ENCODE measurements at regions of chr6 and their contacts with region 1.

Region 1: DNA sequence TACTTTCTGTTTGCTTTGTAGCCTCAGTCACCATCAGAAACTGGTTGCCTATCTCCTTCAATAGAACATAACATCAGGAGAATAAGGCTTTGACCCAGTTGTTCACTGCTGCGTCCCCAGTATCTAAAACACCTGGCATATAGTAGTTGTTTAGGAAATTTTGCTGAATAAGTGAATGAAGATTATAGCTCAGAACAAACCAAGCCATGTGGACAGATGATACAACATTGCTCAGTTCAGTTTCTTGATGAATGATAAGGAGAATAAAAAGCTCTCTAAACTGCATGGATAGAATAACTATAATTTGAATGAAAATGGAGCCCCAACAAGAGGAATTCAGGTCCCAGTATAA is 5.2 kb upstream of the SERPINB1 start:
- DNase-seq: no peak

Region 2: GRCh38 chr6:2497922-2498623 is 348.8 kb before region 1 on chr6:
- intact Hi-C with region 1: no loop called
- DNase-seq: peak in 2 of 10 donors; percentile 17 to 86

Region 3: GRCh38 chr6:2911171-2911570 is 64.3 kb after region 1 on chr6:
- intact Hi-C with region 1: loop called (anchors 2 kb)
- DNase-seq: no peak

Region 4: GRCh38 chr6:2931970-2932748 is 85.3 kb after region 1 on chr6:
- intact Hi-C with region 1: loop called (anchors 1 kb)
- DNase-seq: peak; percentile 58 to 96 (median 85)